ENCODE measurements at regions of chr3 and their contacts with region 1.

Region 1: DNA sequence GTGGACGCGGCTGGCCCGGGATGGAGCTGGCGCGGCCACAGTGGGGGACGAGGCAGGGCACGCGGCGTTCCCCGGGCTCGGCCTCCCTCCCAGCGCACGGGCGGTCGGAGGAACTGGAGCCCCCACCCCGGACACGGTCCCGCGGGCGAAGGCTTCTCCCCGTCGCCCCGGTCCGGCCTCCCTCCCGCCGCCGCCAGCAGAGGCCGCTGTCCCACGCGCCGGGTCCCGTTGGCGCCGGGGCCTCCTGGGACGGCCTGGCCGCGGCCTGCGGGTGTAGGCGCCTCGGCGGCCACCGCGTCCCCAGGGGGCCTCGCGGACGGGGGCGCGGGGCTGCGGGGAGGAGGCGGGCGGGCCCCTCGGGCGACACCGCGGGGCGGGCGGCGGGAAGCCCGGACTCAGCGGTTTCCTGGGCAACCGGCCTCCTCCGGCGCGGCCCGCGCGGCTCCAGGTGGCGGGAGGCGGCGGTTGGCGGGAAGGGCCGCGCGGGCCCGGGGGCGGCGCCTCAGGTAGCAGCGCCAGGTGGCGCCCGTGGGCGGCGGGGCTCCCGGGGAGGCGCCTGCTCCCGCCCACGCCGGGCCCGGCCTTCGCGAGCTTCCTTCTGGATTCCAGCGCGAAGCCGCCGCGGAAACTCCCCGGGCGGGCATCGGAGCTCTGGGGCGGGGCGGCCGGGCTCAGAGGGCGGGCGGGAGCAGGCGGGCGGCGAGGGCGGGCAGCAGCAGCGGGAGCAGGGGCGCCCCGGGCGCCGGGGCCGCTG is 26.7 kb downstream of the MELTF start:
- H3K4me3 Mint-ChIP-seq: peak overlapping the region; percentile 75
- H3K27ac Mint-ChIP-seq: peak overlapping the region; percentile 82
- H3K4me1 Mint-ChIP-seq: peaks cover 41% of the 10 kb centered on the region
- H3K27me3 Mint-ChIP-seq: peaks cover 25% of the 10 kb centered on the region

Region 2: GRCh38 chr3:197029511-197030167 is 26.8 kb after region 1 on chr3 and contains the start of gene MELTF:
- intact Hi-C with region 1: loop called (anchors 2 kb)
- H3K4me3 Mint-ChIP-seq: peak within 1 kb of the TSS; percentile 71
- H3K27ac Mint-ChIP-seq: peak within 1 kb of the TSS; percentile 22
- H3K4me1 Mint-ChIP-seq: peaks cover 44% of the 10 kb centered on the region
- H3K27me3 Mint-ChIP-seq: peaks cover 49% of the 10 kb centered on the region